ENCODE measurements at regions of chr2 and their contacts with region 1.

Region 1: DNA sequence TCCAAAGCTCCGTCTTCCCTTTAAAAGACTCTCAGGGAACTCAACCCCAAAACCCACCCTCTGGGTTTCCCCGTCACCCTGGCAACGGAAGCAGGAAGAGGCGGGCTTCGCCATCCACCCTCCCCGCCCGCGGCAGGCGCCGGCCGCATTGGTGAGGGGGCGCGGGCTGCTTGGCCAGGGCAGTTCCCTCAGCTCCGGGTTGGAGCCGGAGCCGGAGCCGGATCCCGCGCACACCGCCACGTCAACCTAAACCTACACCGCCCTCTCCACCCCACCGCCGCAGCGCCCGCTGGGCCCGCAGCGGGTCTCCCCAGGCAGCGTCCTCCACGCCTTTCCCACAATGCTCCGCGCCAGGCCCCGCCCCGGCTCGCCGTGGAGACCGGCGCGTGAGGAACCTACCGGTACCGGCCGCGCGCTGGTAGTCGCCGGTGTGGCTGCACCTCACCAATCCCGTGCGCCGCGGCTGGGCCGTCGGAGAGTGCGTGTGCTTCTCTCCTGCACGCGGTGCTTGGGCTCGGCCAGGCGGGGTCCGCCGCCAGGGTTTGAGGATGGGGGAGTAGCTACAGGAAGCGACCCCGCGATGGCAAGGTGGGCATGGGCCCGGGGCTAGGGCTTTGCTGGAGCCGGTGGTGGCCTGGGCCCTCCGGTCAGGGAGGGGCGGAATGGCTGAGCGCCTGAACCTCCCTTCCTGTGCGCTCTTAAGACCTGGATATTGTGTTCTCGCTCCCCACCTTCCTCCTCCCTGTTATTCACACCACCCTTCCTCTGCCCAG is at the start of gene DNAJC10:
- DNase-seq: peak; percentile 96
- ATAC-seq: peak; percentile 82
- H3K4me3 ChIP-seq: peak within 1 kb of the TSS; percentile 58 to 91 (median 82)
- H3K4me3 Mint-ChIP-seq: no peak within 1 kb of the TSS
- H3K27ac ChIP-seq: peak within 1 kb of the TSS; percentile 95 to 96
- H3K27ac Mint-ChIP-seq: no peak within 1 kb of the TSS
- H3K4me1 ChIP-seq: peaks cover 37 to 46% of the 10 kb centered on the region in 2 donors
- H3K4me1 Mint-ChIP-seq: peaks cover 24% of the 10 kb centered on the region
- H3K27me3 ChIP-seq: no peaks in the 10 kb centered on the region
- H3K27me3 Mint-ChIP-seq: no peaks in the 10 kb centered on the region
- CTCF ChIP-seq: no peak
- total RNA-seq, gene DNAJC10: 115 and 117 TPM in 2 replicates

Region 2: GRCh38 chr2:181312515-181312927 is 1403.6 kb before region 1 on chr2:
- CTCF ChIA-PET with region 1: no interaction called
- POLR2A ChIA-PET with region 1: interaction called, 7 read pairs
- intact Hi-C with region 1: loop called (anchors 2 kb)
- DNase-seq: peak; percentile 80
- ATAC-seq: peak; percentile 59
- H3K4me3 ChIP-seq: peak overlapping the region in 4 of 5 experiments; percentile 7 to 38 (median 16)
- H3K4me3 Mint-ChIP-seq: peak overlapping the region; percentile 73
- H3K27ac ChIP-seq: peak overlapping the region; percentile 93 to 96
- H3K27ac Mint-ChIP-seq: peak overlapping the region; percentile 92
- H3K4me1 ChIP-seq: peaks cover 54 to 65% of the 10 kb centered on the region in 2 donors
- H3K4me1 Mint-ChIP-seq: peaks cover 53% of the 10 kb centered on the region
- H3K27me3 ChIP-seq: no peaks in the 10 kb centered on the region
- H3K27me3 Mint-ChIP-seq: no peaks in the 10 kb centered on the region
- CTCF ChIP-seq: no peak

Region 3: GRCh38 chr2:182666674-182667314 is 49.3 kb before region 1 on chr2:
- CTCF ChIA-PET with region 1: interaction called, 27 read pairs
- POLR2A ChIA-PET with region 1: no interaction called
- intact Hi-C with region 1: loop called (anchors 1 kb)
- DNase-seq: peak; percentile 68
- ATAC-seq: peak; percentile 72
- H3K4me3 ChIP-seq: no peak overlapping the region
- H3K4me3 Mint-ChIP-seq: no peak overlapping the region
- H3K27ac ChIP-seq: no peak overlapping the region
- H3K27ac Mint-ChIP-seq: no peak overlapping the region
- H3K4me1 ChIP-seq: peaks cover 4% of the 10 kb centered on the region in 2 donors
- H3K4me1 Mint-ChIP-seq: peaks cover 8% of the 10 kb centered on the region
- H3K27me3 ChIP-seq: no peaks in the 10 kb centered on the region
- H3K27me3 Mint-ChIP-seq: no peaks in the 10 kb centered on the region
- CTCF ChIP-seq: peak; percentile 73

Region 4: GRCh38 chr2:182682210-182682609 is 33.9 kb before region 1 on chr2:
- CTCF ChIA-PET with region 1: no interaction called
- POLR2A ChIA-PET with region 1: no interaction called
- intact Hi-C with region 1: loop called (anchors 5 kb)
- DNase-seq: no peak
- ATAC-seq: no peak
- H3K4me3 ChIP-seq: no peak overlapping the region
- H3K4me3 Mint-ChIP-seq: no peak overlapping the region
- H3K27ac ChIP-seq: no peak overlapping the region
- H3K27ac Mint-ChIP-seq: no peak overlapping the region
- H3K4me1 ChIP-seq: peaks cover 9 to 10% of the 10 kb centered on the region in 2 donors
- H3K4me1 Mint-ChIP-seq: peaks cover 11% of the 10 kb centered on the region
- H3K27me3 ChIP-seq: peaks cover 0 to 4% (median 0%) of the 10 kb centered on the region in 4 experiments
- H3K27me3 Mint-ChIP-seq: peaks cover 4% of the 10 kb centered on the region
- CTCF ChIP-seq: no peak

Region 5: DNA sequence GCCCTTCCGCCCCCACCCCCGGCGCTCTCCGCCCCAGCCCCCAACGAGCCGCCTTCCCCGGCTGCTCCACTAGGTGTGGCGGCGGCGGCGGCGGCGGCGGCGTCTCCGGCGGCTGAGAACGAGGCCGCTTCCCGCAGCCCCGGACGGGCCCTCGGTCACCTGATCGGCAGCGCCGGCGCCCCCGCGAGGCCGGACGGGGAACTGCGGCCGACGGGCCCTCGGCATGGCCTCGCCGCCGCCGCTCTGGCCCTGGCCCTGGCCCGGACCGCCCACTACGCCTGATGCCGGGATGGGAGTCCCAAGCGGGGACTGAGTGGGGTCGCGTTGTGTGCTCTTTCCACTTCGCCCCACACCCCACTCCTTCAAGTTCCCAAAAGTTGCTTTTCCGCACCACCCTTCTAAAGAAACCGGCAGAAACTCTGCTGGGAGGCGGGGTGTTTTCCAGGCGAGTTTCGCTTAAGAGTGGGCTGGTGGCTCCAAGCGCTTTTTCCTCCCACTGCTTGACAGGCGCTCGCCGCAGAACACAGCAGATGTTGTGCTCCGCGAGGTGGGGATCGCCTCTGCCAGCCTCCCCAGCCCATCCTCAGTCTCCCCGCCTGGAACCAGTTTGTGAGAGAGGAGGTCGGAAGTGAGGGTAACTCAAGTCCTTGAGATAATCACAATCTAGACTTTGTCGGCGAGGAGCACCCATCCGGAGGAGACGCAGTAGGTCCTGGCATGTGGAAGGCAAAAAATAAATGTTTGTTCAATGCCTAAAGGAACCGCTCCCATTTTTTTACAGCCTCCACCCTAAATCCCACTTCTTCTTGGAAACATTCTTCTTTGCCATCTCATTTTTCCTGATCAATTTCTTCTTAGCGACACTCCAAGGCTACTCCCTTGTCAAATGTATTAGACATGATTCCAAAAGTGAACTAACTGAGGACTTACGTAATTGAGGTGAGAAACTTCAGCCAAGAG is 322.5 kb after region 1 on chr2 and contains the start of gene NCKAP1:
- CTCF ChIA-PET with region 1: no interaction called
- POLR2A ChIA-PET with region 1: no interaction called
- intact Hi-C with region 1: loop called (anchors 1 kb)
- DNase-seq: peak; percentile 65
- ATAC-seq: peak; percentile 70
- H3K4me3 ChIP-seq: peak within 1 kb of the TSS in 3 of 5 experiments; percentile 32 to 43 (median 35)
- H3K4me3 Mint-ChIP-seq: peak within 1 kb of the TSS; percentile 74
- H3K27ac ChIP-seq: no peak within 1 kb of the TSS
- H3K27ac Mint-ChIP-seq: peak within 1 kb of the TSS; percentile 41
- H3K4me1 ChIP-seq: peaks cover 22 to 41% of the 10 kb centered on the region in 2 donors
- H3K4me1 Mint-ChIP-seq: peaks cover 27% of the 10 kb centered on the region
- H3K27me3 ChIP-seq: peaks cover 6 to 58% (median 51%) of the 10 kb centered on the region in 4 experiments
- H3K27me3 Mint-ChIP-seq: peaks cover 50% of the 10 kb centered on the region
- CTCF ChIP-seq: peak; percentile 70
- total RNA-seq, gene NCKAP1: 0.05 TPM in 1 of 2 replicates, not detected in the other

Region 6: GRCh38 chr2:183078465-183079138 is 362.5 kb after region 1 on chr2 and contains the start of gene DUSP19:
- CTCF ChIA-PET with region 1: no interaction called
- POLR2A ChIA-PET with region 1: no interaction called
- intact Hi-C with region 1: loop called (anchors 2 kb)
- DNase-seq: peak; percentile 87
- ATAC-seq: peak; percentile 86
- H3K4me3 ChIP-seq: peak within 1 kb of the TSS; percentile 60 to 98 (median 89)
- H3K4me3 Mint-ChIP-seq: peak within 1 kb of the TSS; percentile 99
- H3K27ac ChIP-seq: peak within 1 kb of the TSS in 1 of 2 donors; percentile 41
- H3K27ac Mint-ChIP-seq: peak within 1 kb of the TSS; percentile 83
- H3K4me1 ChIP-seq: peaks cover 3 to 6% of the 10 kb centered on the region in 2 donors
- H3K4me1 Mint-ChIP-seq: peaks cover 11% of the 10 kb centered on the region
- H3K27me3 ChIP-seq: peaks cover 0 to 9% (median 3%) of the 10 kb centered on the region in 4 experiments
- H3K27me3 Mint-ChIP-seq: no peaks in the 10 kb centered on the region
- CTCF ChIP-seq: no peak
- total RNA-seq, gene DUSP19: 1.7 and 2.0 TPM in 2 replicates

Region 7: DNA sequence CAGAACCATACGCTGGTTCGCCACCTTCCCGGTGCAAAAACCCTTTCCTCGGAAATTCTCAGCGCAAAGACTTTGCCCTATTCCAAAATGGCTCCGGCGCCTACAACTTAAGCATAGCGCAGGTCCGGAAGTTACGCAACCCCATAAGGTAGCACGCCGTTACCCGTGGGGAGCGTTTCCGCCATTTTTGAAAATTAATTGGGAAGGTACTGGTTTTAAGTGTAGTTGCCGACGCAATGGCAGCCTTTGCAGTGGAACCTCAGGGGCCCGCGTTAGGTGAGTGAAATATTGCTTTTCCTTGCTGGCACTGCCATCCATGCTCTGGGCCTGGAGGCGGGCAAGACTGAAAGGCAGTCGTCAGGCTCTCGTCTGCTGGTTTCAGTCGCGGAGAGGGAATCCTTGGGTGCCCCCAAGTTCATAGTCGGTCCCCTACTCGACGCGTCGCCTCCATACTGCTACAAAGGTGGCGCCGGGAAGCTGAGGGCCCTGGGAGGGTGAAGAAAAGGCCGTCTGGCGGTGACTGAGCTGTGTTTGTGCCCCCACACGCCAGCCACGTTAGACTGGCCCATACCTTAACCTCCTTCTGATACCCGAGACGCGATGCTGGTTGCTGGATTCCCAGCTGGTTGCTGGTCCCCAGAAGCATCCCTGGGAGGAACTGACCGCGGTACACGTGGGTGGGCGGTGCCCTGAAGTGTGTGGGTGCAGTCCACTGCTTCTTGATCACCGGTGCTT is 408.3 kb after region 1 on chr2 and contains the start of gene NUP35:
- CTCF ChIA-PET with region 1: no interaction called
- POLR2A ChIA-PET with region 1: no interaction called
- intact Hi-C with region 1: loop called (anchors 2 kb)
- DNase-seq: peak; percentile 89
- ATAC-seq: peak; percentile 97
- H3K4me3 ChIP-seq: peak within 1 kb of the TSS; percentile 82 to 98 (median 94)
- H3K4me3 Mint-ChIP-seq: peak within 1 kb of the TSS; percentile 93
- H3K27ac ChIP-seq: peak within 1 kb of the TSS; percentile 84 to 87
- H3K27ac Mint-ChIP-seq: peak within 1 kb of the TSS; percentile 93
- H3K4me1 ChIP-seq: peaks cover 3 to 15% of the 10 kb centered on the region in 2 donors
- H3K4me1 Mint-ChIP-seq: peaks cover 22% of the 10 kb centered on the region
- H3K27me3 ChIP-seq: peaks cover 0 to 9% (median 5%) of the 10 kb centered on the region in 4 experiments
- H3K27me3 Mint-ChIP-seq: peaks cover 17% of the 10 kb centered on the region
- CTCF ChIP-seq: no peak
- total RNA-seq, gene NUP35: 21.9 and 26.0 TPM in 2 replicates

Measured in B cell (primary cell).